ENCODE measurements at regions of chrX and their contacts with region 1.

Region 1: DNA sequence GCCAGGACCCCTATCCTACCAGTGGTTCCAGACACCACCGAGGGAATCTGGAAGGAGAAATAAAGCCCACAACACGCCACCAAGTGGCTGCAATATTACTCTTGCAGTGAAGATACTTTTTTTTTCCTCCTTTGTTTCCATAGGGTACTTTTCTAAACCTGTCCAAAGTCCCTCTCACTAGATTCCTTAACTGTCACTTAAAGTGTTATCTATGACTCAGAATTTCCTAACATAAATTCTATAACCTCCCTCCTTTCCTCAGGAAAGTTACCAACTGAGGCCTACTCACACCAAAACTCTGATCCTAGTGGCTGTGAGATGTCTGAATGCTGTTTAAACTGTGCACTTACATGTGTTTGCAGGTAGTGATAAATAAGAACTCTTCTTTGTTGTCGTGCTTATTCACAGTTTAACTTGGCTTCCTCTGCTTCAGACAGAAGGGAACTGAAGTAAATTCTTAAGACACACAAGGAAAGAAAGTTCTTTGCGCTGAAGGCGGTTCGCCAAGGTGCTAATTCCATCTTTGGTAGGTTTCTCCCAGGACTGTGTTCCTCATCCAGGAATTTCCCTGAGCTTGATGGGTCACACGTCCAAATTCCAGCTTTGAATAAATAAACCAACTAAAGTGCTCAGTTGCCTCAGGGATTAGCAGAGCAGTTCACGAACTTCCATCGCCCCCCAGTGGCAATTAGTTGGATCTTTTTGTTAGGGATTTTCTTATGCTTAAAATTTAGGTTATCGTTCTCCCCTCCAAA is 10.7 kb upstream of the HCCS start:
- DNase-seq: peak; percentile 58 to 63
- H3K4me3 ChIP-seq: no peak overlapping the region
- H3K4me3 Mint-ChIP-seq: peak overlapping the region; percentile 38
- H3K27ac Mint-ChIP-seq: peak overlapping the region; percentile 33
- H3K4me1 ChIP-seq: peaks cover 24% of the 10 kb centered on the region; the same call in 1 of the 2 replicates
- H3K4me1 Mint-ChIP-seq: no peaks in the 10 kb centered on the region
- H3K27me3 ChIP-seq: no peaks in the 10 kb centered on the region
- H3K27me3 Mint-ChIP-seq: no peaks in the 10 kb centered on the region
- CTCF ChIP-seq: peak; percentile 28 to 34

Region 2: GRCh38 chrX:10755439-10756334 is 344.8 kb before region 1 on chrX:
- CTCF ChIA-PET with region 1: interaction called, 4 read pairs
- POLR2A ChIA-PET with region 1: no interaction called
- intact Hi-C with region 1: loop called (anchors 5 kb)
- DNase-seq: peak; percentile 45 to 67
- H3K4me3 ChIP-seq: no peak overlapping the region
- H3K4me3 Mint-ChIP-seq: peak overlapping the region; percentile 63
- H3K27ac Mint-ChIP-seq: peak overlapping the region; percentile 67
- H3K4me1 ChIP-seq: peaks cover 24% of the 10 kb centered on the region
- H3K4me1 Mint-ChIP-seq: peaks cover 7% of the 10 kb centered on the region
- H3K27me3 ChIP-seq: no peaks in the 10 kb centered on the region
- H3K27me3 Mint-ChIP-seq: no peaks in the 10 kb centered on the region
- CTCF ChIP-seq: no peak

Region 3: DNA sequence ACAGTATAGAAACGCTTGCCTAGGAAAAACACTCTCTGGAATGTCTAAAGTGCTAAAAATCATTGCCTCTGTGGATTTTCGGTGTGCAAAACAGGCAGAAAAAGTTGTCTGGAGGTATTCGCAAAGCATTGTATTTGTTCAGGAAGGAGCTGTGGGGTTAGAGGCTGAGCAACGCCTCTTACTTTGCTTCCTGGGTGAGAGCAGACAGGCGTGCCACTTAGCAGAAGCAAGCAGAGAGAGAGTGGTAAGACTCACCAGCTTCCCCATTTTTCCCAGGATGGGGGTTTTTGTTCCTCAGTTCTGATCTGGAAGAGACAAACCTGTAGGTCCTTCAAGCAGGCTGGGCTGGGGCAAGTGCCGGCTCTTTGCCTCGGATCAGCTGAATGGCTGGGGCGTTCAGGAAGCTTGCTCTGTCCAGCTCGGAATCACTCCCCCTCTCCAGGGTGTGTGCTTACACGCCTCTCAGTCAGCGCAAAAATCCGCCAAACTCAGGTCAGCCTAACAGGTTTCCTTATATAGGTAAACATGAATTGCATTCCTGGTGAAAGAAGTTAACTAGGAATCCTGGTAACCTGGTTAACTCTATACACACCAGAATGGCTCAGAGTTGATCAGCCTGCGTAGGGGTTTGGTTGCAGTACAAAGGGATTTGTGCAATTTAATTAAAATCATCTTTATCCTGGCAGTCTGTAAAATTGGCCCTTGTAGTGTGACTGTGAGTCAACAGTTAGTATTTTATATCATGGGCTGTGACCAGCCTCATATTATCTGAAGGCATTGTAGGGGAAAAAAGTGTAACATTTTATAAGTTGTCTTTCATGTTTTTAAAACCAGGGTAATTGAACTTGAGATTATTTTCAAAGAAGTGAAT is 266.9 kb before region 1 on chrX:
- CTCF ChIA-PET with region 1: interaction called, 8 read pairs
- POLR2A ChIA-PET with region 1: no interaction called
- intact Hi-C with region 1: loop called (anchors 1 kb)
- DNase-seq: peak; percentile 82 to 88
- H3K4me3 ChIP-seq: peak overlapping the region; percentile 61
- H3K4me3 Mint-ChIP-seq: peak overlapping the region; percentile 85
- H3K27ac Mint-ChIP-seq: peak overlapping the region; percentile 59
- H3K4me1 ChIP-seq: peaks cover 13% of the 10 kb centered on the region
- H3K4me1 Mint-ChIP-seq: no peaks in the 10 kb centered on the region
- H3K27me3 ChIP-seq: no peaks in the 10 kb centered on the region
- H3K27me3 Mint-ChIP-seq: no peaks in the 10 kb centered on the region
- CTCF ChIP-seq: no peak

Region 4: DNA sequence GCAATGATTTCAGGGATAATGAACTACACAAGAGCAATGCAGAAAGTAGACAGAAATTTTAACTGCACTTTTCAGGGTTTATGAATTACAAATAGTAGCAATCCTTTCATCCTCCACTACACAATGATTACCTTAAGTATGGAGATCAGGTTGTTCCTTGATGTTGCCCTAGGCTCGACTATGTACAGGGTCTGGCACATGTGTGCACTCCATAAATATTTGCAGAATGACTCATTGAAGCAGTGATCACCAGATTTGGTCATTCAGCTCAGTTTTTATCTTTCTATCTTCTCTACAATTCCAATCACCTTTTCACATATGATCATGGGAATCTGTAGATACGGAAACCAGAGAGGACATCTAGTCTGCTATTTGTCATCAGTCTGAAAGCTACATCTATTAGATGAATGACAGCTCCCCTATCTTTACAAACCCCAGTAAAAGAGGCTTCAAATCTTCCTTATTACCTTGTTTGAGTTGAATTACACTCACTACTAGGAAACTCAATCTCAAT is 161.0 kb before region 1 on chrX:
- CTCF ChIA-PET with region 1: no interaction called
- POLR2A ChIA-PET with region 1: no interaction called
- intact Hi-C with region 1: loop called (anchors 1 kb)
- DNase-seq: peak; percentile 48 to 57
- H3K4me3 ChIP-seq: no peak overlapping the region
- H3K4me3 Mint-ChIP-seq: peak overlapping the region; percentile 9
- H3K27ac Mint-ChIP-seq: peak overlapping the region; percentile 47
- H3K4me1 ChIP-seq: peaks cover 13% of the 10 kb centered on the region
- H3K4me1 Mint-ChIP-seq: peaks cover 23% of the 10 kb centered on the region
- H3K27me3 ChIP-seq: no peaks in the 10 kb centered on the region
- H3K27me3 Mint-ChIP-seq: no peaks in the 10 kb centered on the region
- CTCF ChIP-seq: no peak

Region 5: GRCh38 chrX:11053385-11053784 is 47.1 kb before region 1 on chrX:
- CTCF ChIA-PET with region 1: interaction called, 4 read pairs
- POLR2A ChIA-PET with region 1: no interaction called
- intact Hi-C with region 1: loop called (anchors 1 kb)
- DNase-seq: peak in 1 of 2 experiments; percentile 12
- H3K4me3 ChIP-seq: no peak overlapping the region
- H3K4me3 Mint-ChIP-seq: no peak overlapping the region
- H3K27ac Mint-ChIP-seq: no peak overlapping the region
- H3K4me1 ChIP-seq: peaks cover 9% of the 10 kb centered on the region
- H3K4me1 Mint-ChIP-seq: peaks cover 14% of the 10 kb centered on the region
- H3K27me3 ChIP-seq: no peaks in the 10 kb centered on the region
- H3K27me3 Mint-ChIP-seq: no peaks in the 10 kb centered on the region
- CTCF ChIP-seq: no peak

Region 6: DNA sequence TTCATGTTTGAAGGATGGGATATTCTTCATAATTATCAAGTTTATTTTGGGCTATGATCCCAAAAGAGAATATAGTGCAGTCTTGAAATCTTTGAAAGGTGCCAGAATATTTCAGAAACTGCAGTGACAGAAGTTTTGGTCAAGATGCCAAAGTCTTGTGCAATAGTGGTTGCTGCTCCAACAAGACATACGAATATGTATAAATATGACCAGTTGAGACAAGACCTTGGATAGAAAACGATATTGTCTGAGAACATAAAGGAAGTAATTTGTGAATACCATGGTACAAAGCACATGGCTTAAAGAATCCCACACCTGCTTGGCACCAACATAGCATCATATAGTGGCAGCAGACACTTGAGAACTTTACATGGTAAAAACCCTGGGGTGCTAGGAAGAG is 144.2 kb after region 1 on chrX:
- CTCF ChIA-PET with region 1: no interaction called
- POLR2A ChIA-PET with region 1: no interaction called
- intact Hi-C with region 1: no loop called
- DNase-seq: no peak
- H3K4me3 ChIP-seq: no peak overlapping the region
- H3K4me3 Mint-ChIP-seq: no peak overlapping the region
- H3K27ac Mint-ChIP-seq: no peak overlapping the region
- H3K4me1 ChIP-seq: peaks cover 7% of the 10 kb centered on the region
- H3K4me1 Mint-ChIP-seq: peaks cover 7% of the 10 kb centered on the region
- H3K27me3 ChIP-seq: no peaks in the 10 kb centered on the region
- H3K27me3 Mint-ChIP-seq: no peaks in the 10 kb centered on the region
- CTCF ChIP-seq: no peak

Region 7: GRCh38 chrX:11397680-11398079 is 297.2 kb after region 1 on chrX:
- CTCF ChIA-PET with region 1: no interaction called
- POLR2A ChIA-PET with region 1: no interaction called
- intact Hi-C with region 1: no loop called
- DNase-seq: no peak
- H3K4me3 ChIP-seq: no peak overlapping the region
- H3K4me3 Mint-ChIP-seq: no peak overlapping the region
- H3K27ac Mint-ChIP-seq: no peak overlapping the region
- H3K4me1 ChIP-seq: no peaks in the 10 kb centered on the region
- H3K4me1 Mint-ChIP-seq: no peaks in the 10 kb centered on the region
- H3K27me3 ChIP-seq: no peaks in the 10 kb centered on the region
- H3K27me3 Mint-ChIP-seq: no peaks in the 10 kb centered on the region
- CTCF ChIP-seq: no peak